ENCODE measurements at regions of chrX and their contacts with region 1.

Region 1: DNA sequence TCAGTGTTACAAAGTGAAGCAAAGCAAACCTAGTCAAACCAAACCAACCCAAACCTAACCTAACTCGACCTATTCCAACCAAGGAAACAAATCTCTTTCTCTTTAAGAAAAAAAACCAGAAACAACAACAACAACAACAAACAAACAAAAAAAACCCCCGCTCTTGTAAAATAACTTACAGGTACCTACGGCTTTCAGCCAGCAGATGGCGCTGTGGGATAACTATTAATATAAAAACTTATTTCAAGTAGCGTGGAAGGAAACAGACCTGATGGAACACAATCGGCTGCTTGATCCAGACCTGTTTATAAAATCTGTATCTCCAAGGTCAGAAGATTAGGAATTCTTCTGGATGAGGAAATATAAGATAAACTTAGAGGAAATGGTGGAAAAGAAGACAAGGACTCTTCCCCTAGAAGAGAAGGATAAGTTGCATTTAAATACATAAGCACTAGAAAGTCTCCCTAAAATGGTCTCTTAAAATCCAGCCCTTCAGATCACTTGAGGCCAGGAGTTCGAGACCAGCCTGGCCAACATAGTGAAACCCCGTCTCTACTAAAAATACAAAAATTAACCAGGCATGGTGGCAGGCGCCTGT is 34.4 kb upstream of the CDKL5 start:
- DNase-seq: peak; percentile 45 to 59
- ATAC-seq: peak in 3 of 4 donors; percentile 47 to 77 (median 56)
- H3K4me3 ChIP-seq: no peak overlapping the region
- H3K27ac ChIP-seq: no peak overlapping the region
- H3K4me1 ChIP-seq: no peaks in the 10 kb centered on the region
- H3K27me3 ChIP-seq: no peaks in the 10 kb centered on the region
- CTCF ChIP-seq: peak; percentile 78

Region 2: DNA sequence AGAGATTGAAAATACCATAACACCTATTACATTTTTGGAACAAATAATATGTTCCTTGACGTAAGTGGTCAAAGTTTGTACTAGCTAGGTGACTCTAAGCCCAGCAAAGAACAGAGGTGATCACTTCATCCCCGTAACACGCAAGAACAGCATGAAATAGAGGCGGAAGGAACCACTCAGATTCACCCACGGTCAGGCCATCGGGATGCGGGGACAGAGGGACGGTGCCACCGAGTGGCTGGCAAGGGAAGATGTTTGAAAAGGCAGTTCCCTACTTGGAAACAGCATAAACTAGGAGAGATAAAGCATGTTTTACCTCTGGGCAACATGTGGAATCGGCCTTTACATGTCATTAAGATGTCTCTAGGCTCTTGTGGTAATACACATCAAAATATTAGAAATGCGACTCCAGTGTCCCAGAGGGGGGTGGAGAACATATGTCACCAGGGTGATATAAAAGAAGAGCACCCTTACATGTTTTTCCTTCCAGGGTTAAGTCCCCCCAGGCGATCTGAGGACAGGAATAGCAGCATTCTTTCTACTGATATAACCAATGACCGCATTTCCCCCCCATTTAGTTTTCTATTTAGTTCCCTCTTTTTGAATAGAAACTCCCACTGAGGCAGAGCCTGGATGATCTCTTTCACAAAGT is 508.9 kb after region 1 on chrX:
- intact Hi-C with region 1: loop called in 1 of 2 experiments (anchors 5 kb)
- DNase-seq: no peak
- ATAC-seq: no peak
- H3K4me3 ChIP-seq: no peak overlapping the region
- H3K27ac ChIP-seq: no peak overlapping the region
- H3K4me1 ChIP-seq: no peaks in the 10 kb centered on the region
- H3K27me3 ChIP-seq: no peaks in the 10 kb centered on the region
- CTCF ChIP-seq: peak; percentile 33

Region 3: GRCh38 chrX:19334945-19335626 is 944.0 kb after region 1 on chrX:
- intact Hi-C with region 1: loop called (anchors 5 kb)
- DNase-seq: no peak
- ATAC-seq: no peak
- H3K4me3 ChIP-seq: no peak overlapping the region
- H3K27ac ChIP-seq: no peak overlapping the region
- H3K4me1 ChIP-seq: no peaks in the 10 kb centered on the region
- H3K27me3 ChIP-seq: no peaks in the 10 kb centered on the region
- CTCF ChIP-seq: no peak

Measured in psoas muscle (tissue), 8 donors.